CD8-positive, alpha-beta T cell (primary cell): ENCODE measurements at regions of chr7 and their contacts with region 1.

Region 1: DNA sequence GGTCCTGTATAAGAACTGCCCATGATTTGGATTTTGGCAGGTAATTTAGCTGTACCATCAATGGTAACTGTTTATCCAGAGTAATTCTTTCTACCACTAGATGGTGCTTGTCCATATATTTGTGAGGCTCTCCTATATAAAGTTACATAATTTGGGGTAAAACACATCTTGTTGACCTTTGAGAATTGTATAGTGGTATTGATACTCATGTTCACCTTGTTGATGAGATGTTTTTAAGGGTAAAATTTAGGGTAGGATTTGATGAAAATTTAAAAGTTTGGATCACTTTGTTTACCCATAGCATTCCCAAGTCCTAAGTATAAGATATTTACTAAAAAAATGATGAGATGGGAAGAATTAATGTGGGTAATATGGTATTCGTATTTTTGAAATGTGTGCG is 31.6 kb downstream of the ST7 start:
- DNase-seq: peak in 2 of 9 experiments; percentile 46 to 61
- ATAC-seq: peak; percentile 56
- H3K4me3 ChIP-seq: no peak overlapping the region
- H3K4me3 Mint-ChIP-seq: no peak overlapping the region
- H3K27ac ChIP-seq: no peak overlapping the region
- H3K27ac Mint-ChIP-seq: no peak overlapping the region
- H3K4me1 ChIP-seq: no peaks in the 10 kb centered on the region
- H3K4me1 Mint-ChIP-seq: no peaks in the 10 kb centered on the region
- H3K27me3 ChIP-seq: no peaks in the 10 kb centered on the region
- H3K27me3 Mint-ChIP-seq: no peaks in the 10 kb centered on the region
- CTCF ChIP-seq: peak; percentile 77

Region 2: DNA sequence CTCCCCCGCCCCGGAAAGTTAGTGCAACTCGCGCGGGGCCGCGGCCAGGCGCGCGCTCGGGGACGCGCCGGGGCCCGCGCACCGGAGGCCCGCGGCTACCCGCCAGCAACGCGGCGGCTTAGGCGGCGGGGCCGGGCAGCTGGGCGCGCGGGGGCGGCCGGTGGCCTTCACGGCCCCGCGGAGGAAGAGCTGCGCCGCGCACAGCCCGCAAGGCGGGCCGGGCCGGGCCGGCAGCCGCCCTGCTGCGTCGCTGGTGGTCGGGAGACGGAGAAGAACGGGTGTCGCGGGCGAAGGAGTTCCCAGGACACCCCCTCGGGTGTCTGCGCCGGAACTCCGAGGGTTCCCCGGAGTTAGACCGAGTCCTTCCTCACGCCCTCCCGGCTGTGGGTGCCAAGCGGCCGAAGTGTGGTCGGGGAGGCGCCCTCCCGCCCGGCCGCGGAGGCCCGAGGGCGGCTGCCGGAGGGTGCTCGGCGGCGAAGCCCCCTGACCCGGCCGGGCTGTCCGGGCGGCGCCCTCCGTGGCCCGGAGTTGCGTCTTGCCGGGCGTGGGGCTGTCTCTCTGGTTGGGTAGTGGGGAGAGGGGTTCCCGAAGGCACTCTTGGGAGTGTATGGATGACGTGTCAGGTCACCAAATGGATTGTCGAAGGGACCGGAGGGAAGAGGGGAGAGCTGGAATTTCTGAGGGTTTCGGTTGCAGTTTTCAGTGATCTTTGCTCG is 31.0 kb before region 1 on chr7:
- CTCF ChIA-PET with region 1: interaction called, 7 read pairs
- POLR2A ChIA-PET with region 1: no interaction called
- intact Hi-C with region 1: loop called in 1 of 2 experiments (anchors 1 kb)
- DNase-seq: peak in 7 of 9 experiments; percentile 1 to 80 (median 35)
- ATAC-seq: peak; percentile 69
- H3K4me3 ChIP-seq: peak overlapping the region; percentile 61 to 75
- H3K4me3 Mint-ChIP-seq: peak overlapping the region; percentile 93
- H3K27ac ChIP-seq: peak overlapping the region; percentile 49 to 69
- H3K27ac Mint-ChIP-seq: peak overlapping the region; percentile 83
- H3K4me1 ChIP-seq: peaks cover 15% of the 10 kb centered on the region
- H3K4me1 Mint-ChIP-seq: peaks cover 21% of the 10 kb centered on the region
- H3K27me3 ChIP-seq: no peaks in the 10 kb centered on the region
- H3K27me3 Mint-ChIP-seq: no peaks in the 10 kb centered on the region
- CTCF ChIP-seq: no peak

Region 3: GRCh38 chr7:117008883-117009531 is 24.1 kb after region 1 on chr7:
- CTCF ChIA-PET with region 1: interaction called, 160 read pairs
- POLR2A ChIA-PET with region 1: no interaction called
- intact Hi-C with region 1: loop called (anchors 1 to 2 kb)
- DNase-seq: peak in 2 of 9 experiments; percentile 39 to 61
- ATAC-seq: peak; percentile 62
- H3K4me3 ChIP-seq: no peak overlapping the region
- H3K4me3 Mint-ChIP-seq: peak overlapping the region; percentile 66
- H3K27ac ChIP-seq: no peak overlapping the region
- H3K27ac Mint-ChIP-seq: no peak overlapping the region
- H3K4me1 ChIP-seq: peaks cover 61% of the 10 kb centered on the region
- H3K4me1 Mint-ChIP-seq: peaks cover 60% of the 10 kb centered on the region
- H3K27me3 ChIP-seq: no peaks in the 10 kb centered on the region
- H3K27me3 Mint-ChIP-seq: no peaks in the 10 kb centered on the region
- CTCF ChIP-seq: no peak

Region 4: DNA sequence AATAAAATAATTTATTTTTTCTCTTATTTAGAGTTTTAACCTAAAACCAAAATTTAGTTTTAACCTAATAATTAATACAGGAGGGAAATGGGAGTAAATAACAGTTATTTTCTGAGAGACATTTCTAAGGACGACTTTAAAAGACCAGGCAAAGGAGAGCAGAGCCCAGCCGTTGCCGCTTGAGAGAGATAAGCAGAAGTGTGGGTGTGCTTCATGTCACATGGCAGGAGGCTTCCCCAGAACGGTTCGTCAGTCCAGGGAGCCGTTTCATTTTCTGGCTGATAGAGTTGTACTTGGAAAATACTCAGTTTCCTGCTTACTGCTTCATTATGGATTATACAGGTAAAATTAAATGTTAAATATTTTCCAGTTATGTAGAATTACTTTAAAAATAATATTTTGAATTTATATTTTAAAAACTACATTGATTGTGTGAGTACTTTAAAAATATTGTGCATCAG is 29.8 kb after region 1 on chr7:
- CTCF ChIA-PET with region 1: interaction called, 160 read pairs
- POLR2A ChIA-PET with region 1: no interaction called
- intact Hi-C with region 1: loop called (anchors 1 to 2 kb)
- DNase-seq: peak in 3 of 9 experiments; percentile 13 to 28 (median 24)
- ATAC-seq: no peak
- H3K4me3 ChIP-seq: no peak overlapping the region
- H3K4me3 Mint-ChIP-seq: no peak overlapping the region
- H3K27ac ChIP-seq: no peak overlapping the region
- H3K27ac Mint-ChIP-seq: no peak overlapping the region
- H3K4me1 ChIP-seq: peaks cover 23% of the 10 kb centered on the region
- H3K4me1 Mint-ChIP-seq: peaks cover 40% of the 10 kb centered on the region
- H3K27me3 ChIP-seq: no peaks in the 10 kb centered on the region
- H3K27me3 Mint-ChIP-seq: no peaks in the 10 kb centered on the region
- CTCF ChIP-seq: no peak

Region 5: GRCh38 chr7:117119192-117119924 is 134.4 kb after region 1 on chr7:
- CTCF ChIA-PET with region 1: interaction called, 278 read pairs
- POLR2A ChIA-PET with region 1: no interaction called
- intact Hi-C with region 1: loop called (anchors 1 kb)
- DNase-seq: peak; percentile 48 to 83 (median 76)
- ATAC-seq: peak; percentile 44
- H3K4me3 ChIP-seq: no peak overlapping the region
- H3K4me3 Mint-ChIP-seq: no peak overlapping the region
- H3K27ac ChIP-seq: no peak overlapping the region
- H3K27ac Mint-ChIP-seq: no peak overlapping the region
- H3K4me1 ChIP-seq: no peaks in the 10 kb centered on the region
- H3K4me1 Mint-ChIP-seq: no peaks in the 10 kb centered on the region
- H3K27me3 ChIP-seq: no peaks in the 10 kb centered on the region
- H3K27me3 Mint-ChIP-seq: no peaks in the 10 kb centered on the region
- CTCF ChIP-seq: peak; percentile 95

Region 6: DNA sequence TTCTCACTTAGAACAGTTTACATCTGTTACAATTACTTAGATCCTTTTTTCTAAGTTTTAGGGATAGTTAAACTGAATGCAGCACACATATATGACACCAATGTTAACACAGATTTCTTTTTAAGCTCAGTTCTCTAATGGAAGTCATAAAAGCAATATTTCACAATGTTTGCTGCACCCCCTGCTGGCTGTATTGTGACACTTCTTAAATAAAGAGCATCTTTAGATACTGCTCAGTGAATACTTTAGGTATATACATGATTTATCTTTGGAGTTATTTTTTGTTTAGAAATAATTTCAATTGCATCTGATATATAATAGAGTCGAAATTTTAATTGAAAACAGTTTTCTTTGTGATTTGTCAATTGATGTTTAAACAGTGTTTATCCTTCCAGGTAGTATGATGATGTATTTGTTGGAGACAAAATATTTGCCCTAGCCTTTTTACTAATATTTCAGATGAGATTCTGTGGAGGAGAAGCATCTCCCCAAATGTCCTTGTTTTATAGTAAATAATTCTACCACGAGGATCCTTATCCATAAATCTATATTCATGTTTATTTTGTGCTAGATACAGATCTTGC is 142.8 kb after region 1 on chr7:
- CTCF ChIA-PET with region 1: interaction called, 278 read pairs
- POLR2A ChIA-PET with region 1: no interaction called
- intact Hi-C with region 1: loop called in 1 of 2 experiments (anchors 1 kb)
- DNase-seq: peak in 8 of 9 experiments; percentile 20 to 69 (median 51)
- ATAC-seq: peak; percentile 73
- H3K4me3 ChIP-seq: no peak overlapping the region
- H3K4me3 Mint-ChIP-seq: no peak overlapping the region
- H3K27ac ChIP-seq: no peak overlapping the region
- H3K27ac Mint-ChIP-seq: no peak overlapping the region
- H3K4me1 ChIP-seq: no peaks in the 10 kb centered on the region
- H3K4me1 Mint-ChIP-seq: peaks cover 3% of the 10 kb centered on the region
- H3K27me3 ChIP-seq: no peaks in the 10 kb centered on the region
- H3K27me3 Mint-ChIP-seq: no peaks in the 10 kb centered on the region
- CTCF ChIP-seq: peak; percentile 92

Region 7: DNA sequence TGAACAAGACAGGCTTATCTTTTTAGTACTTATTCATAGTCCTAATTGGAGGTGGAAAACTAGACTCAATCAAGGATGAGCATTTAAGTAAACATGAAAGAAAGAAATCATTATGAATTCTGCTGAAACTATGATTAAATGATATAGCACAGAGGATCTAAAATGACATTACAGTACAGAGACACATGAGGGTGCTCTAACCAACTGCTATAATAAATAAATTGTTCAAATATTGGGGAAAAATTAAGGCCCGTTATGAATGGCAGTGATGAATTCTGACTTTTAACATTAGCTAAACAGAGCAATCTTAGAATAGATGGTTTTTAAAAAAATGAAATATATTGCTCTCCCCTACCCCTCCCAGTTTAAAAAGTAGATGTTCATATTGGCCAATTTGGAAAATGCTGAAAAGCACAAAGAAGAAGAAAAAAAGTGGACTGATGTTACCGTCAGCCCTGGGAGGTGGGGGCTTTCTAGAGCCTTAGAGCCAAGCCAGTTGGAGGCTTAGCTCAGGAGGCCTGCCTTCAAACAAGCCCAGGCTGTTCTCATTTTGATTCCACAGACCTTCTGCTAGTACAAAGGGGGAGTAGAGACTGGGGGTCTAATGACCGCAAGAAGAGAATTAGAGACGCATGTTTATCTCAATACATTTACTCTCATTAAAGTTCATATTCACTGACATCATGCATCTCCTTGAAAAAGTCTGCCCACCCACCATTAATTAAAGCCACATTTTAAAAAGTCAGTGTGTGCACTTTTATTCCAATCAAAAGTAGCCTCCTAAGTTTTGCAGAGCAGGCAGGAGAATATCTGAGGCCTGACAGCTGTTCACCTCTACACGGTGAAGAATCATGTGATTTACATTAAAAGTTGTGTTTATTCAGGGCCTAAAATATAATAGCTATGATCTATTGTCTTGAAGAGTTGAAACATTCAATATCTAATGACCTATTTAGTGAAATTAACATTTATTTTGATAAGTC is 328.0 kb after region 1 on chr7:
- CTCF ChIA-PET with region 1: no interaction called
- POLR2A ChIA-PET with region 1: no interaction called
- intact Hi-C with region 1: no loop called
- DNase-seq: no peak
- ATAC-seq: no peak
- H3K4me3 ChIP-seq: no peak overlapping the region
- H3K4me3 Mint-ChIP-seq: no peak overlapping the region
- H3K27ac ChIP-seq: no peak overlapping the region
- H3K27ac Mint-ChIP-seq: no peak overlapping the region
- H3K4me1 ChIP-seq: no peaks in the 10 kb centered on the region
- H3K4me1 Mint-ChIP-seq: no peaks in the 10 kb centered on the region
- H3K27me3 ChIP-seq: no peaks in the 10 kb centered on the region
- H3K27me3 Mint-ChIP-seq: peaks cover 6% of the 10 kb centered on the region
- CTCF ChIP-seq: no peak